Posterior cingulate gyrus (tissue), 11 donors: ENCODE measurements at regions of chr1 and their contacts with region 1.

Region 1: GRCh38 chr1:211735208-211736170 is 60.1 kb upstream of the NEK2 start:
- DNase-seq: peak in 9 of 10 donors; percentile 41 to 94 (median 71)

Region 2: GRCh38 chr1:211698161-211699026 is 37.1 kb before region 1 on chr1:
- intact Hi-C with region 1: loop called (anchors 5 kb)
- DNase-seq: peak; percentile 69 to 97 (median 87)

Region 3: GRCh38 chr1:211859405-211859804 is 123.9 kb after region 1 on chr1:
- intact Hi-C with region 1: no loop called
- DNase-seq: no peak